Activated naive CD8-positive, alpha-beta T cell treated with anti-CD3 and anti-CD28 coated beads, Interleukin-2, amount 10 ng/mL, durations not matched to agents 7 days and 5 days (primary cell): ENCODE measurements at regions of chr3 and their contacts with region 1.

Region 1: GRCh38 chr3:136250226-136250902 is at the start of gene PCCB:
- DNase-seq: peak; percentile 94
- ATAC-seq: peak; percentile 99
- H3K4me3 Mint-ChIP-seq: peak within 1 kb of the TSS; percentile 85
- H3K27ac Mint-ChIP-seq: peak within 1 kb of the TSS; percentile 89
- H3K4me1 Mint-ChIP-seq: peaks cover 15% of the 10 kb centered on the region
- H3K27me3 Mint-ChIP-seq: peaks cover 2% of the 10 kb centered on the region
- total RNA-seq, gene PCCB: 23.9 to 25.2 TPM

Region 2: GRCh38 chr3:136196401-136197158 is 53.8 kb before region 1 on chr3:
- POLR2A ChIA-PET with region 1: interaction called, 11 read pairs
- DNase-seq: peak; percentile 97
- ATAC-seq: peak; percentile 82
- H3K4me3 Mint-ChIP-seq: peak overlapping the region; percentile 92
- H3K27ac Mint-ChIP-seq: peak overlapping the region; percentile 96
- H3K4me1 Mint-ChIP-seq: peaks cover 19% of the 10 kb centered on the region
- H3K27me3 Mint-ChIP-seq: no peaks in the 10 kb centered on the region

Region 3: DNA sequence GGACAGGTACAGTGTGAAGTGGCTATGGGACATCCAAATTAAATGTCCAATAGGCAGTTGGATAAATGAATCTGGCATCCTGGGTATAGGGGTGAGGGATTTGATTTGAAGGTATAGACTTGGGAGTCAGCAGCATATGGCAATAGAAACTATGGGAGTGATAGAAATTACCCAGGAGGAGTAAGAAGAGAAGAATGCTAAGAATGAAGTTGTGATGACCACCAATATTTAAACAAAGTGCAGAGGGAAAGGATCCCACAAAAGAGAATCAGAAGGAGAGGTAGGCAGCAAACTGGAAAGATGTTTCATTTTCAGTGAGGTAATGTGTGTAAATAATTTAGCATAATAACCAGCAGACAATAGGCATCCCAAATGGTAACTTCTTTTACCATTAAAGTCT is 40.4 kb before region 1 on chr3:
- POLR2A ChIA-PET with region 1: no interaction called
- DNase-seq: no peak
- ATAC-seq: no peak
- H3K4me3 Mint-ChIP-seq: no peak overlapping the region
- H3K27ac Mint-ChIP-seq: no peak overlapping the region
- H3K4me1 Mint-ChIP-seq: no peaks in the 10 kb centered on the region
- H3K27me3 Mint-ChIP-seq: peaks cover 17% of the 10 kb centered on the region